ENCODE measurements at regions of chr11 and their contacts with region 1.

Region 1: GRCh38 chr11:77047007-77047927 is 13.1 kb downstream of the B3GNT6 start:
- DNase-seq: no peak
- ATAC-seq: peak; percentile 86

Region 2: DNA sequence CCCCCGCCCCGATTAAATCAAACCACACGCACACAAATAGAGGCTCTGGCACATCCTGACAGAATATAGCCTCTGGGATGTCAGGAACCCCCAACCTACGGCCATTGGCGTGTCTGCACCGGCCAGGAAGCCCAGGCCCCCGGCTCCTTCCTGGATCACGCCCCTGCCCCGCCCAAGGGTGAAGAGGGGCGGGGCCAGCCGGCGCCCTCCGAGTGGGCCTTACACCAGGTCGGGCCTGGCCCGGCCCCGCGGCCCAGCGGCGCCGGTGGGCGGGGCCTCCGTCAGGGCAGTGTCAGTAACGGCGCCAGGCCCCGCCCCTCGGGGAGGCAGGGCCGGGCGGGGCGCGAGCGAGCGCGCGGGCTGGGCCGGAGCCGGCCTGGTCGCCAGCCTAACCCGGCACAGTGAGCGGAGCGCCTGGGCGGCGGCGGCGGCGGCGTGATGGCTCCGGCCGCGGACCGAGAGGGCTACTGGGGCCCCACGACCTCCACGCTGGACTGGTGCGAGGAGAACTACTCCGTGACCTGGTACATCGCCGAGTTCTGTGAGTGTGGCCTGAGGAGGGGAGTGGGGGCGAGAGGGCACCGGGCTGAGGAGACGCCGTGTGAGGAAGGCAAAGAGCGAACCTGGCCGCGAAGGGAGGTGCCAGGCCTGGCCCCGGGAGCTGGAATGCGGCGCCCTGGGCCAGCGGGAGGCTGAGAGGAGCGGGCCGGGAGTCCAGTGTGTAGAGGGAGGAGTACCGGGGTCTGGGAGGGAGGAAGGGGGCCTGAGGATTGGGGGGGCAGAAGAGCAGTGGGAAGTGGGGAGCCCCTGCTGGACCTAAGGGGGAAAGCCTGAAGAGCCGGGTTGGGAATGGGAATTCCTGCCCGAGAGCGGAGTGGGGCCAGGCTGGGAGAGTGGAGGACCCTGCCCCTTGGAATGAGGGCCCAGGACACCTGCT is 186.5 kb before region 1 on chr11 and contains the start of gene ACER3:
- intact Hi-C with region 1: no loop called
- DNase-seq: peak; percentile 97
- ATAC-seq: peak; percentile 100
- total RNA-seq, gene ACER3: 9.9 TPM

Region 3: GRCh38 chr11:77066229-77067042 is 19.2 kb after region 1 on chr11 and contains the start of gene CAPN5:
- intact Hi-C with region 1: loop called (anchors 1 kb)
- DNase-seq: peak; percentile 95
- ATAC-seq: peak; percentile 99
- total RNA-seq, gene CAPN5: 3.7 TPM

Region 4: DNA sequence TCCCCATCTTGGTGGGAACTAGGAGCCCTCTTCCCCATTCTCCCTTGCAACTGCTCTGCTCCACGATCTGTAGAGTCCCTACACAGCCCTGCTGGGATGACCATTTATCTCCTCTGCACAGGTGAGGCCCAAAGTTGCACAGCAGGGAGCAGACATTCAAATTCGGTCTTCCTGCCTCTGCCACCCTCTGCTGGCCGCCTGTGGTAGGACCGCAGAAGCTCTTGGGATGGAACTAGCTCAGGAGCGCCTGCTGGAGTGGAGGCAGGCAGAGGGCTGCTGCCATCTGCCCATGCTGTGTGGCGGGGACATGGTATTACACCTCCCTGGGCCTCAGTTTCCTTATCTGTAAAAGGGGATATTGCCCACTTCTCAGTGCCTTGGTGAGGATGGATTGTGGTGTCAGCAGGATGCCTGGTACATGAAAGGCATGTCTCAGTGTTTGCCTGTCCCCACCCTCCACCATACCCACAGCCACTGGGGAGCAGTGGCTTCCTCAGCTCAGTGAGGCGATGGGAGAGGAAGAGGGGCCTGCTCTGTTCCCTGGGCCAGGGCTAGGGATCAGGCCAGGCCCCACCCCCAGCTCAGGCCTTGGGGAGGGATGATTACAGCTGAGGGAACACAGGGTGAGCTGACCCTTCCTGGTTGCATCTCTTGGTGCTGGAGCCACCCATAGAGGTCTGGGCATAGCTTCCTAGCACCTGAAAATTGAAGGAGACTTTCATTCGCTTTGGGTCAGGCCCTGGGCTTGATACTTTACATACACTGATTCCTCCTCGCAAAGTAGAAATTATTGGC is 44.1 kb after region 1 on chr11:
- intact Hi-C with region 1: loop called (anchors 1 kb)
- DNase-seq: no peak
- ATAC-seq: peak; percentile 77

Region 5: DNA sequence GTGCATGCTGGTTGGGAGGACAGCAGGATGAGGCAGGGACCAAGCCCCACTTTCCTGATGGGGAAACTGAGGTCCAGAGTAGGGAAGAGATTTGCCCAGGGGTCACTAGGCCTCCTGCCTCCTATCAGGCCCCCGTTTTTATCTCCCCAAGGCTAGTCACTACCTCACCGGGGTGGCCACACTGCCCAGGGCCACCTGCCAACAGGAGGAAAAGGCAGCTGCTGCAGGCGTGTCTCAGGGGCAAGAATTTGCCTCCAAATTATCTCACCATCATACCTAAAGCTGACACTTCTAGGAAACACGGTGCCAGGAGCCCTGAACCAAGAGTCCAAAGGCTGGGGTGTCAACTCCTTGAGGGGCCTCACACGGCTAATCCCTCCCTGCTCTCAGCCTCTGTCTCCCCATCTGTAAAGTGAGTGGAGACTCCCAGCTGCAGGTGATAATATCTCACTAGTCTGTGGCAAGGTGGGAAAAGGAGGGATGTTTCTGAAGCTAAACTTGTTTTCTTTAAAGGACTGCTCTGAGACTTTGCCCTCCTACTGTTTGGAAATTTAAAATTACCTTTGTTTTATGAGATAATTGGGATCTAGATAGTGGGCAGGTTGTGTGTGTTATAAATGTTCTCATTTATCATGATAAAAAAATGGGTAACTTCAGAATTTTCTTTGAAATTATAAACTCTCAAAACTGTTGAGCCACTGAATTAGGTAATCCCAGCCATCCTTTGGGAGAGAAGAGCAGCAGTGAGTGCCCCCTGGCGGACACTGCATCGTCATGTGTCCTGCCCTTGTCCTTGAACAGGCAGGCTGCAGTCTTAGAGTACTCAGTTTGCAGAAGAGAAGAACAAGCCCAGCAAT is 140.7 kb after region 1 on chr11:
- intact Hi-C with region 1: loop called (anchors 5 kb)
- DNase-seq: peak; percentile 91
- ATAC-seq: peak; percentile 84